ENCODE measurements at regions of chr18 and their contacts with region 1.

Region 1: GRCh38 chr18:32893915-32894314 is 121.1 kb upstream of the KLHL14 start:
- DNase-seq: no peak
- H3K4me3 ChIP-seq: no peak overlapping the region
- H3K27ac ChIP-seq: no peak overlapping the region
- H3K4me1 ChIP-seq: peaks cover 0 to 8% (median 5%) of the 10 kb centered on the region in 4 experiments; a peak in 5 of 7 replicates
- H3K27me3 ChIP-seq: no peaks in the 10 kb centered on the region
- CTCF ChIP-seq: peak in 2 of 3 experiments; percentile 33 to 70; a peak in 2 of 4 replicates
- EP300 ChIP-seq: no peak
- POLR2A ChIP-seq: no peak
- RAD21 ChIP-seq: peak; percentile 22 to 41; a peak in 2 of 4 replicates

Region 2: DNA sequence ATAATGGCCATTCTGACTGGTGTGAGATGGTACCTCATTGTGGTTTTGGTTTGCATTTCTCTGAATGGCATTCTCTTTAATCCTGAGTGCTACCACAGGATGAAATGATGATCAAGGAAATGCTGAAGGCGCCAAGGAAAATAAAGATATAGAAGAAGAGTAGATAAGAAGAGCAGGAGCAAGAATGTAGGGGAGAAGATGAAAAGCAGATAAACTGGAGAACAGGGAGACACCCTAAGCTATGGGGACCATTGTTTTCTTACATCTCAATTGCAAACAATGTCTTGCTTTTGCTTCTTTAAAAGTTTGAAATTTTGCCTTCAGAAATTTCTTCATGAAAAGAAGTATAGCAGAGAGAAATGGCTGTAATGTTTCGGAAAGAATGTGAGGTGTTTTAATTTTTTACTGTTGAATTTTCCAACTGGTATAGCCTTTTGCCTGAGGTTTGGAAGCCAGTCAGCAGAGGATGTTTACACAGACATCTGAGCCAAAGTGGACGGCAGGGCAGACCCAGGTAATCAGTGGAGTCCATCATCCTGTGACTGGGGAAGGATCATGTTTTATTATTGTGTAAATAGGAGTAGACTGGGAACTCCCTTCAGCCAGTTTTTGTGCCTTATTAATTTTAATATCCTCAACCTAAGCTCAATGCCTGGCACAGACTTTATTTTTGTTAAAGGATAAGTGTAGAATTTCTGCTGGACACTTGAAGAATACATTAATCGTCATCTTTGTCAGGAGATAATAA is 281.4 kb before region 1 on chr18:
- CTCF ChIA-PET with region 1: no interaction called
- POLR2A ChIA-PET with region 1: no interaction called
- DNase-seq: no peak
- H3K4me3 ChIP-seq: no peak overlapping the region
- H3K27ac ChIP-seq: no peak overlapping the region
- H3K4me1 ChIP-seq: no peaks in the 10 kb centered on the region
- H3K27me3 ChIP-seq: no peaks in the 10 kb centered on the region
- CTCF ChIP-seq: no peak
- EP300 ChIP-seq: no peak
- POLR2A ChIP-seq: no peak
- RAD21 ChIP-seq: no peak

Region 3: GRCh38 chr18:32879497-32879896 is 14.4 kb before region 1 on chr18:
- CTCF ChIA-PET with region 1: interaction called, 12 read pairs
- POLR2A ChIA-PET with region 1: no interaction called
- DNase-seq: no peak
- H3K4me3 ChIP-seq: no peak overlapping the region
- H3K27ac ChIP-seq: no peak overlapping the region
- H3K4me1 ChIP-seq: peaks cover 0 to 2% (median 0%) of the 10 kb centered on the region in 4 experiments; a peak in 1 of 7 replicates
- H3K27me3 ChIP-seq: no peaks in the 10 kb centered on the region
- CTCF ChIP-seq: no peak
- EP300 ChIP-seq: no peak
- POLR2A ChIP-seq: no peak
- RAD21 ChIP-seq: no peak

Region 4: DNA sequence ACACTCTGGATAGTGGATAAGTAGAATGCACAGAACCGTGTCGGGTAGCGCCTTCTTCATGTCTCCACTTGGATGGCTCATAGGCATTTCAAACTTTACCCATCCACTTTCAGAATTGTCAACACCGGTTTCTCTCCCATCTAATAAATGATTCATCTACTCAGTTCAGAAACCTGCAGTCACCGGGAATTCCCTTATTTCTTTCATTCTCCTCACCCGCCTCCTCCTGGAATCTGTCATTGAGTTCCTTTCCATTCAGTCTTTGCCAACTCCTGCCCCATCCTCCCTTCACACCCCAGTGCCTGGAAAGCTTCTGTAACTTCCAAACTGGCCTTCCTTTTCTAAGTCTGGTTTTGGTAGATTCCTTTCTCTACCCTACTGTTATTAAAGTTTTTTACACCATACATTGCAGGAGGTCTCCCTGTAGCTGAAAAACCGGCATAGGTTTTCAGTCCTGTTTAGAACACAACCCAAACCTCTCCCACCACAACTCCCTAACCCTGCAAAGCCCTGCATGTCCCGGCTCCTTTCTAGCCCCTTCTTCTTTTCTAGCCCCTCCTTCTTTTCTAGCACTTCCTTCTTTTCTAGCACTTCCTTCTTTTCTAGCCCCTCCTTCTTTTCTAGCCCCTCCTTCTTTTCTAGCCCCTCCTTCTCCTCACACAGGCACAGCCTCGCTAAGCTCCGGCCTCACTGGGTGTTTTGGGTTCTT is 12.7 kb after region 1 on chr18:
- CTCF ChIA-PET with region 1: interaction called, 12 read pairs
- POLR2A ChIA-PET with region 1: no interaction called
- DNase-seq: no peak
- H3K4me3 ChIP-seq: no peak overlapping the region
- H3K27ac ChIP-seq: no peak overlapping the region
- H3K4me1 ChIP-seq: no peaks in the 10 kb centered on the region
- H3K27me3 ChIP-seq: no peaks in the 10 kb centered on the region
- CTCF ChIP-seq: no peak
- EP300 ChIP-seq: no peak
- POLR2A ChIP-seq: no peak
- RAD21 ChIP-seq: no peak

Region 5: GRCh38 chr18:32911660-32912284 is 17.9 kb after region 1 on chr18:
- CTCF ChIA-PET with region 1: interaction called, 12 read pairs
- POLR2A ChIA-PET with region 1: no interaction called
- DNase-seq: no peak
- H3K4me3 ChIP-seq: no peak overlapping the region
- H3K27ac ChIP-seq: no peak overlapping the region
- H3K4me1 ChIP-seq: no peaks in the 10 kb centered on the region
- H3K27me3 ChIP-seq: no peaks in the 10 kb centered on the region
- CTCF ChIP-seq: no peak
- EP300 ChIP-seq: no peak
- POLR2A ChIP-seq: no peak
- RAD21 ChIP-seq: no peak

Region 6: DNA sequence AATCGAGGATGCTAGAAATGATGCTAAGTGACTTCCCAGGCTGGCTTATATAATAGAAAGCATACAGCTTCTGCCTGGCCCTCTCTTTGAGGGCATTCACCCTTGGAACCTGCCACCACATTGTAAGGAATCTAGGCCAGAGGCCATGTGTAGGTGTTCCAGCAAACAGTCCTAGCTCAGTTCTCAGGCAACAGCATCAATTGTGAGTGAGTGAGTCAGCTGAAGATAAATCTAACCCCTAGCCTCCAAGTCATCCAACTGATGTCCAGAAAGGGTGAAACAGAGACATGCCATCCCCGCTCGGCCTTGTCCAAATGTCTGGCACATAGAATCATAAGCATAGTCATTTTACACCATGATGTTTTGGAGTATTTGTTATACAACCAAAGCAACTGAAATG is 203.2 kb after region 1 on chr18:
- CTCF ChIA-PET with region 1: no interaction called
- POLR2A ChIA-PET with region 1: no interaction called
- DNase-seq: no peak
- H3K4me3 ChIP-seq: no peak overlapping the region
- H3K27ac ChIP-seq: no peak overlapping the region
- H3K4me1 ChIP-seq: no peaks in the 10 kb centered on the region
- H3K27me3 ChIP-seq: no peaks in the 10 kb centered on the region
- CTCF ChIP-seq: no peak
- EP300 ChIP-seq: no peak
- POLR2A ChIP-seq: no peak
- RAD21 ChIP-seq: no peak